OCI-LY7 (cell line): ENCODE measurements at regions of chr7 and their contacts with region 1.

Region 1: DNA sequence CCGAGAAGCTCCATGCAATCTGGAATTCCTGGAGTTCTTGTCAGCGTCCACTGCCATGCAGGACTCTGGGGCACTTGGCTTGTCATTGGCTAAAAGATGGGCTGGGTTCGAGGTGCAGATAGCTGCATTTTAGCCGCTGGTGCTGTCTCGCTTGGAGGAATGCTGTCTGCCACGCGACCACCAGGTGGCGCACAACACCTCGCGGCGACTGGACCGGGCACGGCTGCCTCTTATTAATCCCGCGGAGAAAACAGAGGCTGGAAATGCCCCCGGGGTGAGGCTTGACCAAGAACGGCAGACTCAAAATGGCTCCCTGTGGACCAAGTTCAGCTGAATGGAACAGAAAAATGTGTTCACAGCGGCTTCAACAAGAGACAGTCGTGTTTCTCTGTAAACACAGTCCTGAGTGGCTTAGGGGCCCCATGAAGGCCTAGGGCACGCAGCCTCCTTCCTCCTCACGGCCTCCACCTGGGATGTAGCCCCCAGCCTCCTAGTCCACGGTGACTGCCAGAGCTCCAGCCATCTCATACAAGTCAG is 46.2 kb downstream of the AOC1 start:
- DNase-seq: peak; percentile 80
- H3K4me3 ChIP-seq: peak overlapping the region; percentile 61
- H3K27ac ChIP-seq: peak overlapping the region; percentile 96
- H3K4me1 ChIP-seq: peaks cover 69% of the 10 kb centered on the region
- CTCF ChIP-seq: peak; percentile 99

Region 2: DNA sequence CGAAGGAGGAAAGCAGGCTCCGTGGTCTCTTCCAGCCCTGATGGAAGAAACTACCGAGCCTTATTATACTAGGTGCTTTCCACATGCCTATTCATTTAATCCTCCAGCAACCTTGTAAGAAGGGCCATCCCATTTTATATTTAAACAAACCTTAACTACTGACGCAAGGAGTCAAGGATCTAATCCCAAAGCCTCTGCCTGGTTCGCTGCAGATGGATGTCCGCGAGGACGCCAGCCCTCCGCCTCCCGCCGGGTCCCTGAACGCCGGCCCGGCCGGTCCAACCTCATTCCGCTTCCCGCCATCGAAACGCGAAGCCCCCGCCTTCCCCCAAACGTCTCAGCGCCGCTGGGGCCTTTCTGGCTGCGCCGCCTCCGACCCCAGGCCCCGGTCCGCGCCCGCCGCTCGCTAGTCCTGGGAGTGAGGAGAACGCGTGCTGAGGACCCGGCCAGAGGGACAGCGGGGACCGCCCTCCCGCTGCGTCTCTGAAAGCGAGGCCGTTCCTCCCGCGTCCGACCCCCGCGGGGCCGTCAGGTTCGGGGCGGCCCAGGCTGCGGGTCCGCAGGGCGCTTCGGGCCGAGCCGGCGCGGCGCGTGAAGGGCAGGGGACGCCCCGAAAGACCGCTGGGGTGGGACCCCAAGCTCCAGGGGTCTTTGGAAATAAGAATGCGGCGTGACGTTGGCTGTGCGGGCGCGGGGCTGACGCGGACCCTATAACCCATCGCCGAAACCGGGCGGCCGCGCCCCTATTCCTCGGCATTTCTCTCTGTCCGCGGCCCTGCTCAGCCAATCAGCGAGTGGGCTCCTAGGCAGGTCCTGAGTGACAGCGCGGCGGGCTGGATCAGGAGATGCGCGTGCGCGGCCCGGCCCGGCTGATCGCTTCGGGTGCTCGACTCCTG is 1025.2 kb before region 1 on chr7 and contains the start of gene ATP6V0E2:
- CTCF ChIA-PET with region 1: no interaction called
- POLR2A ChIA-PET with region 1: no interaction called
- intact Hi-C with region 1: loop called (anchors 5 kb)
- DNase-seq: peak; percentile 95
- H3K4me3 ChIP-seq: peak within 1 kb of the TSS; percentile 75
- H3K27ac ChIP-seq: peak within 1 kb of the TSS; percentile 25
- H3K4me1 ChIP-seq: peaks cover 48% of the 10 kb centered on the region
- CTCF ChIP-seq: no peak
- total RNA-seq, gene ATP6V0E2: 35.2 and 38.6 TPM in 2 replicates

Region 3: DNA sequence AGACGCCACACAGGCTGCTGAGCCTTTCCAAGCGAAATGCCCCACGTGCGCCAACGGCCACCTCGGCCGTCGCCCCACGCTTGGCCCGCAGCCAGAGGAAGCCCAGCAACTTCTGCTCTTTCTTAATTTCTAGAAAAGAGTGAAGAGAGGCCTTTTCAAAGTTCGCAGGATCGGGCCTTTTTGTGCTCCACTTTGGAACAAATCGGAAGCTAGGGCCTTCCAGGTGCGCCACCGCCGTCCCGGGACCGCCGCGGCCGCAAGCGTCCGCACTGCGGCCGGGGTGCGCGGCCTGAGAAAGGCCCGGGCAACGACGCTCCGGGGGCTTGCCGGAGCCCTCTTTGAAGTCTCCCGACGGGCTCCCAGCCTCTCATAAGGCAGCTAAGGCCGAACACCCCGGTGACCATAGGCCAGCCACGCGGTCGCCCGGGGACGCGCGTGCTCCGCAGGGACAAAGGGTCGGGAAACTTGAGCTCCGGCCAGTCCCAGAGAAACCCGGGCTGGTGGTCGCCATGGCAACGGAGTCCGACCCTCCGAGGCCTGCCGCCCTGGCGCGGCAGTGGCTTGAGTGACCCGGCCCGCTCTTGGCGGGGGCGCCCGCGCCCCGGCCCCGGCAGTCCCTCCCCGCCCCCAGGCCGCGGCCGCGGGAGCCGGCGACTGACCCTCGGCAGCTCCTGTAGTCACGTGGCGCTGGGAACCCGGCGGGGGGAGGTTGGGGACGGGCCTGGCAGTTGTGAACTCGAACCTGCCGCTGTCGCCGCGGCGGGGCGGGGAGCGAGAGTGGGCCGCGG is 530.3 kb before region 1 on chr7 and contains the start of gene REPIN1:
- CTCF ChIA-PET with region 1: no interaction called
- POLR2A ChIA-PET with region 1: no interaction called
- intact Hi-C with region 1: loop called (anchors 10 kb)
- DNase-seq: peak; percentile 80
- H3K4me3 ChIP-seq: peak within 1 kb of the TSS; percentile 87
- H3K27ac ChIP-seq: peak within 1 kb of the TSS; percentile 39
- H3K4me1 ChIP-seq: peaks cover 68% of the 10 kb centered on the region
- CTCF ChIP-seq: no peak
- total RNA-seq, gene REPIN1: 36.9 and 46.2 TPM in 2 replicates

Region 4: GRCh38 chr7:150800581-150801241 is 97.8 kb before region 1 on chr7 and contains the start of gene TMEM176A:
- CTCF ChIA-PET with region 1: no interaction called
- POLR2A ChIA-PET with region 1: no interaction called
- intact Hi-C with region 1: no loop called
- DNase-seq: no peak
- H3K4me3 ChIP-seq: no peak within 1 kb of the TSS
- H3K27ac ChIP-seq: no peak within 1 kb of the TSS
- H3K4me1 ChIP-seq: no peaks in the 10 kb centered on the region
- CTCF ChIP-seq: no peak
- total RNA-seq, gene TMEM176A: not detected in 2 replicates

Region 5: DNA sequence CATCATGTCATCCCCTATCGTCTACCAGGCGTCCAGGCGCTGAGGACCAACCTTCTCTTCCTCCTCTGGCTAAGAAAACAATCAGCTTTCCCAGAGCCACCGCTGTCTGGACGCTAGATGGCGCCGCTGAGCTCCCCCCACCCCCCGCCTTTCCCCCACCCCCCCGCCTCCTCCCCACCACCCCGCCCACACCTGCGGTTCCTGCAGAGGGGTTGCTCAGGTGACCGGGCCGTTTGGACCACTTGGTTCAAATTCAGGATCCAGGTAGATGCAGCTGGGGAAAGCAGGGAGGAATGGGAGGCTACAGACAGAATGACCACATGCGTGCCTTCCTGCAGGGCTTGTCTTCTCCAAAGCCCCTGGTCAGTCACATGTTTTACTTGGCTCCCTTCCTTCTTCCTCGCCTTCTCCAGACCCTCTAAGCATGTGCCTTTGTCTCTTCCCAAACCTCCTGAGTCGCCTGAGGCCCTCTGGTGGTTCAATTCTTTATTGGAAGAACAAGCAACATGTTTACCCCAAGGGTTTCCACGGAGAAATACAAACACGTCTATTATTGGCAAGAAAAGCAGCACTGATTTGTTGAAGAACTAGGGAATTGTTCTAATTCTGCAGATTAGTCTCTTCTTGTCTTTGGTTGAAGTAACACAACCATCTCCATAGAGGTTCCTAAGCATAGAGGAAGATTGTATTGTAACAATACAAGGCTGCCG is 21.6 kb before region 1 on chr7:
- CTCF ChIA-PET with region 1: interaction called, 4 read pairs
- POLR2A ChIA-PET with region 1: interaction called, 5 read pairs
- intact Hi-C with region 1: loop called (anchors 2 kb)
- DNase-seq: peak; percentile 62
- H3K4me3 ChIP-seq: no peak overlapping the region
- H3K27ac ChIP-seq: no peak overlapping the region
- H3K4me1 ChIP-seq: peaks cover 17% of the 10 kb centered on the region
- CTCF ChIP-seq: peak; percentile 69

Region 6: DNA sequence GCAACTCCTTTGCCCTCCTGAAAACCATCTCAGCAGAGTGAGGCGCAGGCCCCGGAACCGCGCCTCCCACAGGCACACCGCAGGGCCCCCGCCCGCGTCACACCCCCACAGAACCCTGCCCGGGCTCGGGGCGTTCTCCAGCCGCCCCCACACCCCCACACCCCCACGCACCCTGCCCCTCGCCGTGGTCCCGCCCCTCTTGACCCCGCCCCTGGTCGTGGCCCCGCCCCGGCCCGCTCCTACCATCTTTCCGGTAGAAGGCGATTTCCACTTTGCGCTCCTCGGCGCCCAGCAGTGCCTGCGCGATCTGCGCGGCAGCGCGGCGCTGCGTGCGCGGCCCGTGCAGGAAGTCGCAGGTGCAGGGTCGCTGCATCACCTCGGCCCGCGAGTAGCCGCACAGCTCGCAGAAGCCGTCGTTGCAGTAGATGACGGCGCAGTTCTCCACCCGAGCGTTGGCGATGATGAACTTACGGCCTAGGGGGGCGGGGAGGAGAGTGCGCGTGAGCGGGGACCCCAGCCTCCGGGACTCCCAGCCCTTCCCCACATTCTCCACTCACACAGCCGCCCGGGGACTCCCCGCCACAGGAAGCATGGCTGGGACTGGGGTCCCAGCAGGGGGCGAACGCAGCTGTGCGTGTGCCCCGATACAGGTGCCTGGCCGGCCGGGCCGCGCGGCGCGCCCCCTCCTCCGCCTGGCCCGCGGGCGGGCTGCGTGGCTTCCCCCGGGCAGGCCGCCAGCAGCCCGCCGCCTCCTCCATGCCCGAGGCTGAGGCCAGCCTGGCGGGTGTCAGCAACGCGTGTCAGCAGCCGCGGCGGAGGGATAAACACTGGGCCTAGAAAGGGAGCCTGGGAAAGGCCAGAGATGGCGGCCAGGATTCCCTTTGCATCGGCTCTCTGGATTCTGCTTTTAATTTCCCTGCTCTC is 76.2 kb after region 1 on chr7:
- CTCF ChIA-PET with region 1: interaction called, 3 read pairs
- POLR2A ChIA-PET with region 1: interaction called, 3 read pairs
- intact Hi-C with region 1: loop called (anchors 1 kb)
- DNase-seq: peak; percentile 92
- H3K4me3 ChIP-seq: peak overlapping the region; percentile 72
- H3K27ac ChIP-seq: peak overlapping the region; percentile 84
- H3K4me1 ChIP-seq: peaks cover 64% of the 10 kb centered on the region
- CTCF ChIP-seq: peak; percentile 67

Region 7: DNA sequence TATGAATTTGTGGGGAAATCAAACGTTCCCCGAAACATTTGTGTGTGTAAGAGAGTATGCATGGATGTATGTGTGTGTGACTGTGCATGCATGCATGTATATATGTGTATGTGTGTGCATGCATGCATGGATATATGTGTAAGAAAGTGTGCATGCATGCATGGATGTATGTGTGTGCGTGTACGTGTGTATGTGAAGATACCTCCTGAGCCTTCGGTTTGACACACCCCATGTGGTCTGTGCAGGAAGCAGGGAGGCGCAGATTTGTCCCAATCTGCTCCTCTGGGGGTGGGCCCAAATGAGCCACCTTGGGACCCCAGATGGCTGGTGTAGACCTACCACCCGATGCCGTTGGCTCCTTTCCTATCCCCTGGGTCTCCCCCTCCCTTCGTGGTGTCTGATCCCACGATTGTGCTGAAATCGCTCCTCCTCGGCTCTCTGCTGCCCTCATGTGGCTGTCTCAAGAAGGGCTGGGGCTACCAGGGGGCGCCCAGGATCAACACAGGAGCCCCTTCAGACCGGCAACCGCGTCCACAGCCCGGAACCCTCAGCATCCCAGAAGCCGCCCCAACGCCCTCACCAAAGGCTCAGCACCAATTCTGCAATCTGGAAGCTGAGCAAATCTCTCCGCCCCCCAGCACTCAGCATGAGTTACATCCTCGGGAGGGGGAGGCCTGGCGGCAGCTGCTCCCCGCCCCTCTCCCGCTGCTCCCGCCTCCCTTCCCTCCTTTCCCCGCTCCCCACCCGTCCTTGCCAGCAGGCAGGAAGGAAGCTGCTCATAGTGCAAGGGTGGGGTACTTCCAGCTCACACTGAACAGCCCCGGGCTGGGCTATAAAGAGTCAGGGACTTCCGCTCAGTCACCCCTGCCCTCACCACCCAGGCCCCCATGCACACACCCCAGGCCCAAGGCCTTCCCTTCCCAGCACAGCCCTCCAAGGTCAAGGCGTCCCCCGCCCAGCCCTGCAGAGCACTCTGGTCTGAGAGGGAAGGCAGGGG is 90.0 kb after region 1 on chr7:
- CTCF ChIA-PET with region 1: no interaction called
- POLR2A ChIA-PET with region 1: interaction called, 4 read pairs
- intact Hi-C with region 1: loop called (anchors 1 kb)
- DNase-seq: peak; percentile 68
- H3K4me3 ChIP-seq: no peak overlapping the region
- H3K27ac ChIP-seq: no peak overlapping the region
- H3K4me1 ChIP-seq: peaks cover 11% of the 10 kb centered on the region
- CTCF ChIP-seq: peak; percentile 88

Region 8: GRCh38 chr7:151080522-151081169 is 182.1 kb after region 1 on chr7 and contains the start of gene FASTK:
- CTCF ChIA-PET with region 1: no interaction called
- POLR2A ChIA-PET with region 1: no interaction called
- intact Hi-C with region 1: loop called (anchors 10 kb)
- DNase-seq: peak; percentile 92
- H3K4me3 ChIP-seq: peak within 1 kb of the TSS; percentile 91
- H3K27ac ChIP-seq: peak within 1 kb of the TSS; percentile 72
- H3K4me1 ChIP-seq: peaks cover 54% of the 10 kb centered on the region
- CTCF ChIP-seq: no peak
- total RNA-seq, gene FASTK: 114 and 118 TPM in 2 replicates